ENCODE measurements at regions of chr1 and their contacts with region 1.

Region 1: GRCh38 chr1:168342572-168343280 is 62.0 kb downstream of the TBX19 start:
- DNase-seq: peak; percentile 84
- ATAC-seq: peak; percentile 99
- H3K4me3 Mint-ChIP-seq: peak overlapping the region; percentile 63
- H3K27ac Mint-ChIP-seq: no peak overlapping the region
- H3K4me1 Mint-ChIP-seq: peaks cover 6% of the 10 kb centered on the region
- H3K27me3 Mint-ChIP-seq: no peaks in the 10 kb centered on the region
- CTCF ChIP-seq: peak; percentile 81

Region 2: GRCh38 chr1:168225476-168226190 is 117.1 kb before region 1 on chr1 and contains the start of gene SFT2D2:
- CTCF ChIA-PET with region 1: interaction called, 15 read pairs
- POLR2A ChIA-PET with region 1: no interaction called
- DNase-seq: peak; percentile 57
- ATAC-seq: peak; percentile 87
- H3K4me3 Mint-ChIP-seq: peak within 1 kb of the TSS; percentile 90
- H3K27ac Mint-ChIP-seq: peak within 1 kb of the TSS; percentile 57
- H3K4me1 Mint-ChIP-seq: peaks cover 32% of the 10 kb centered on the region
- H3K27me3 Mint-ChIP-seq: peaks cover 10% of the 10 kb centered on the region
- CTCF ChIP-seq: no peak
- total RNA-seq, gene SFT2D2: 23.2 to 28.1 TPM (median 25.2 TPM) in 3 replicates

Region 3: GRCh38 chr1:168328731-168329399 is 13.9 kb before region 1 on chr1:
- CTCF ChIA-PET with region 1: interaction called, 15 read pairs
- POLR2A ChIA-PET with region 1: no interaction called
- DNase-seq: no peak
- ATAC-seq: no peak
- H3K4me3 Mint-ChIP-seq: no peak overlapping the region
- H3K27ac Mint-ChIP-seq: no peak overlapping the region
- H3K4me1 Mint-ChIP-seq: peaks cover 15% of the 10 kb centered on the region
- H3K27me3 Mint-ChIP-seq: no peaks in the 10 kb centered on the region
- CTCF ChIP-seq: no peak

Region 4: GRCh38 chr1:168386949-168387586 is 44.3 kb after region 1 on chr1:
- CTCF ChIA-PET with region 1: interaction called, 25 read pairs
- POLR2A ChIA-PET with region 1: no interaction called
- DNase-seq: peak; percentile 73
- ATAC-seq: peak; percentile 76
- H3K4me3 Mint-ChIP-seq: peak overlapping the region; percentile 70
- H3K27ac Mint-ChIP-seq: peak overlapping the region; percentile 92
- H3K4me1 Mint-ChIP-seq: peaks cover 32% of the 10 kb centered on the region
- H3K27me3 Mint-ChIP-seq: peaks cover 10% of the 10 kb centered on the region
- CTCF ChIP-seq: no peak

Region 5: GRCh38 chr1:168433238-168433637 is 90.5 kb after region 1 on chr1:
- CTCF ChIA-PET with region 1: interaction called, 13 read pairs
- POLR2A ChIA-PET with region 1: no interaction called
- DNase-seq: no peak
- ATAC-seq: no peak
- H3K4me3 Mint-ChIP-seq: no peak overlapping the region
- H3K27ac Mint-ChIP-seq: no peak overlapping the region
- H3K4me1 Mint-ChIP-seq: peaks cover 3% of the 10 kb centered on the region; the same call in 1 of the 2 replicates
- H3K27me3 Mint-ChIP-seq: no peaks in the 10 kb centered on the region
- CTCF ChIP-seq: no peak

Region 6: DNA sequence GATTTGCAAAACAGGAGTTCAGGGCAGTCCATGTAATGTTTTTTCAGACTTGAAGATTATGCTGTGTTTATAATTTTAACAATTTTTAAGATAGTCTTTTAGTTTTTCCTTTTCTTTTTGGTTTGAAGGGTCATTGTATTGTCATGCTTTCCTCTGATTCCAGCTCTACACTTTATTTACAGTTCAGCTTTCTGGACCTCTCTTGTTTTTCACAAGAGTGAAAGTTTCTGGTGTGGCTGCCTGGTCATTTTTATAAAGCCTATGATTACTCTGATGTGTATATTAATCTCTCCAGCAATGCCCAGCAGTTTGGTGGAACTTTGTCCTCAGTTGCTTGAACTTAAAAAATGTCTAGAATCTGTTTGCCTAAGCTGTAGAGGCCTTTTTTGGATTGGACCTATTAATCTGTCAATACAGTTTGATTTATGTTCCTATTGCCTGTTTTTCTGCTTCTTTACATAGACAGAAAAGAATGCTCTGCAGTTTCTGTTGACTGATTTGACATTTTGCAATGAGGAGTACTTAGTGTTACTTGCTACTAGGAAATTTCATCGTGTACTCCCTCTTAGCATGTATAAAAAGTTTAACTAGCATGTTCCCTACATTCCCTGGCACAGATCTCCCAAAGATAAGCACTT is 148.9 kb after region 1 on chr1:
- CTCF ChIA-PET with region 1: no interaction called
- POLR2A ChIA-PET with region 1: no interaction called
- DNase-seq: no peak
- ATAC-seq: no peak
- H3K4me3 Mint-ChIP-seq: no peak overlapping the region
- H3K27ac Mint-ChIP-seq: no peak overlapping the region
- H3K4me1 Mint-ChIP-seq: no peaks in the 10 kb centered on the region
- H3K27me3 Mint-ChIP-seq: no peaks in the 10 kb centered on the region
- CTCF ChIP-seq: no peak

Region 7: DNA sequence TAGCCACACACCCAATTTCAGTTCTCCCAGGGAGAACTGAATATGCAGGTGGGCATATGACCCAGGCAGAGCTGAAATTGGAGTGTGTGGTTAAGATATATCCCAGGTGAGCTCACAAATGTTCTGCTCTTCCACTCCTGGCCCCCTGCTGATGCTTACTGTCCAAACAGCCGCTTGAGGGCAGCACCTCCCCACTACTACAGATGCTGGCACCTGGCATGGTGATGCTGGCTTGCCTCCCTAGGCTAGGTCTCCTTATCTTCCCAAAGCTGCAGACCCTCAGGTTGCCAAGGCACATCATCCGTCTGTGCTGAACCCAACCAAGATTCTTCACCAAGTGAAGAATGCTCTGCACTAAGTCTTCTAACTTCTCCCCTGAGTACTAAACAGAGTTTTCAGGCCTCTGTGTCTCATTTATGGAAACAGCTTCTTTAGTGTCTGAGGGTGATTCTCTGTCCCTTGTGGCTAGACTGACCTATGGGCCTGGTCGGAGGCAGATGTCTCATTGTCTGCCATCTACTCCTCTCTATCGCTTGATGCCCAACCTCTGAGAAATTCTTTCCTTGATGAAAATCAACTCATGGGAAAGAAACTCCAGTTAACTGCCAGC is 260.9 kb after region 1 on chr1:
- CTCF ChIA-PET with region 1: interaction called, 13 read pairs
- POLR2A ChIA-PET with region 1: no interaction called
- DNase-seq: peak; percentile 85
- ATAC-seq: peak; percentile 97
- H3K4me3 Mint-ChIP-seq: no peak overlapping the region
- H3K27ac Mint-ChIP-seq: no peak overlapping the region
- H3K4me1 Mint-ChIP-seq: peaks cover 3% of the 10 kb centered on the region
- H3K27me3 Mint-ChIP-seq: no peaks in the 10 kb centered on the region
- CTCF ChIP-seq: peak; percentile 77

Measured in WTC11 (cell line).